HEK293T (cell line): ENCODE measurements at regions of chr15 and their contacts with region 1.

Region 1: DNA sequence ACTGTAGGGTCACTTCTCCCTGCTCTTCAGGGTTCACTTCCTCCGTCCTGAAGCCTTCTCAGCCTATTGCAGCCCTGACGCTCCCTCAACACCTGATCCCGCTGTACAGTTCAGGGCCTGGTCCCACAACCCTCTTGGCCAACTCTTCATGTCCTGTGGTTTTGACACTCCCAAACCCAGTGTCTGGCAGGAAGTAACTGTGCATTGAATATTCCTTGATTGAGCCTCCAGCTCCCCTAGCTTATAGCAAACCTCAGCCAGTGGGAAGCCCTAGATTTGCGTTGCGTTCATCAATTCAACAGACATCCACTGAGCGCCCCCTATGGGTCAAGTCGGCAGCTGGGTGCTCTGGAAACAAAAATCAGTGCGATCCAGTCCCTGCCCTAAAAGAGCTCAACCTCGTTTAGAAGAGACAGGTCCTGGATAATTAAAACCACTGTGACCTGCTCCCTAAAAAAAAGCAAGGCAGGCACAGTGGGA is 13.5 kb downstream of the UBAP1L start:
- DNase-seq: peak; percentile 53

Region 2: DNA sequence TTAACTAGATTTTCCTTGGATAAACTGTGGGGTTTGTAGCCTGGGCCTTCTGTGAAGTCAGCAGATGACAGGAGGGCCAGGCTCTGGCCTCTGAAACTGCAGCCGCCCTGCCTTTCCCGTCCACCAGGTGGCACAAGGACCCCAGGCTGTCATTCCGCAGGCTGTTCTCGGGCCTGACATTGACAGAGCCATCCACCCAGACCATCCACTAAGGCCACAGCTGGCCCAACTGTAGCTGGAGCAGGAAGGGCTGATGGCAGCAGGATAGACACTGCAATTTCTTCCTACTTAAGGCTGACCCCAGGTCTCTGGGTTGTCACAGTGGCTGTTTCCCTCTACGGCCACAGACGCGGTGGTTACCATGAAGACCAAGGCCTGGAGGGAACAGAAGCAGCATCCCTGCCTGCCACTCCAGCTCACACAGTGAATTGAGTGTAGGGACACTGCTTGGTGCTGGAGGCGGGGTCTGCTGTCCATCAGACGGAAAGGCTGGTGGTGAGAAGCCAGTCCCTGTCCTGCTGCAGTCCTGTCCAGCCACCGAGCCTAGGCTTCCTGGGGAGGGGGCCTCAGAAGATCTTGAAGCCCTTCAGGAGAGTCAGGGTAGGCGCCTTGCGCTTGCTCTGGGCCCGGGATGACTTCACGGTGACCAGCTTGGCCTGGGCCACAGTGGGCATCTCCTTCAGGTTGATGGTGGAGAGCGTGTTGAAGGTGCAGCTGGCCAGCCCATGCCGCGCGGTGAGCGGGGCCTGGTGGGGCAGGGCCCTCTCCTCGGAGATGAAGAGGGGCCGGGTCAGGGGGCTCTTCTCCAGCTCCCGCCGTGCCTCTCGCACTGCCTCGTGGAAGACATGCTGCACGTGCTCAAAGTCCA is 46.9 kb before region 1 on chr15:
- CTCF ChIA-PET with region 1: interaction called, 14 read pairs
- POLR2A ChIA-PET with region 1: no interaction called
- DNase-seq: peak; percentile 72

Region 3: GRCh38 chr15:65115542-65115941 is 14.1 kb after region 1 on chr15:
- CTCF ChIA-PET with region 1: interaction called, 10 read pairs
- POLR2A ChIA-PET with region 1: no interaction called
- DNase-seq: no peak

Region 4: DNA sequence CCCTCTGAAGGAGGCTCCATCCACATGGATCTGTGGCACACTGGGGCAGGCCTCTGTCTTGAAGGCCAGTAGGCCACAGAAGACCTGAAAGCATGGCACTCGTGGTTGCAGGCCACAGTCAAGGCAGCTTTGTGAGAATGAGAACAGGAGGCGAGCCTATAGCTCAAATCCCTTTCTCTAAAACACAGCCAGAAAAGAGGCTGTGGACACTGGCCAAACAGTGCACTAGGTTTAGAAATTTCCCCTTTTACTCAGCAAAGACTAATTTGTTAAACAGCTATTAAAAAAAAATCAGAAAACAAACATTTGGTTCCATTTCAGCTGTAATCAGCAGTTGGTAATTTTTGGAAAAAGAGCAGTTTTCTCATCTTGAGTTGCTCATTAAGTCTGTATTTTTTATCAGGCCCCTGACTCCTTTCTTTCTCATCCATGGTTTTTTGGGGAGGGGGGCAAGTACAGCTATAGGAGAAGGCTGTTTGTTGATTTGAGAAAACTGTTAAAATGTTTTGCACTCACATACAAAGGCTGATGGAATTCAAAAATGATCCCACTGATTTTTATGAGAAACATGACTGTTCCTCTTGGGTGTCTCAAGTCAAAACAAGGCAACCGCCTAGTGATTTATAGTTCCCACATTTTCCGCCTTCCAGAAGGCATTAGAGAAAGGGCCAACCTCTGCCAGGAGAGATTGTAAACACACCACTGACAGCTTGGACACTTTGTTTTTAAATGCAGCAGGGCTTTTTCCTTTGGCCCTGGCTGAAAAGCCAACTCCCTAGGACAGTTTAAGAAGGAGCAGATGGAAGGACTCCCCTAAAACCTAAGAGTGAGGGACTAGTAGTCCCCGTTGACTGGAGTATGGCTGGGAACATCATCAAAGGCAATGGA is 157.2 kb after region 1 on chr15:
- CTCF ChIA-PET with region 1: no interaction called
- POLR2A ChIA-PET with region 1: no interaction called
- DNase-seq: no peak